Activated CD8-positive, alpha-beta T cell treated with anti-CD3 and anti-CD28 coated beads, Interleukin-2, amount 10 ng/mL, durations not matched to agents 7 days and 5 days (primary cell): ENCODE measurements at regions of chr22 and their contacts with region 1.

Region 1: GRCh38 chr22:24525416-24526037 is 29.4 kb downstream of the GUCD1 start:
- DNase-seq: peak; percentile 91
- ATAC-seq: peak; percentile 96
- H3K4me3 Mint-ChIP-seq: no peak overlapping the region
- H3K27ac Mint-ChIP-seq: no peak overlapping the region
- H3K4me1 Mint-ChIP-seq: peaks cover 14% of the 10 kb centered on the region
- H3K27me3 Mint-ChIP-seq: peaks cover 3% of the 10 kb centered on the region

Region 2: GRCh38 chr22:24325105-24325757 is 200.3 kb before region 1 on chr22:
- CTCF ChIA-PET with region 1: interaction called, 12 read pairs
- POLR2A ChIA-PET with region 1: no interaction called
- DNase-seq: peak; percentile 57
- ATAC-seq: peak; percentile 88
- H3K4me3 Mint-ChIP-seq: peak overlapping the region; percentile 0
- H3K27ac Mint-ChIP-seq: peak overlapping the region; percentile 23
- H3K4me1 Mint-ChIP-seq: peaks cover 34% of the 10 kb centered on the region
- H3K27me3 Mint-ChIP-seq: no peaks in the 10 kb centered on the region

Region 3: DNA sequence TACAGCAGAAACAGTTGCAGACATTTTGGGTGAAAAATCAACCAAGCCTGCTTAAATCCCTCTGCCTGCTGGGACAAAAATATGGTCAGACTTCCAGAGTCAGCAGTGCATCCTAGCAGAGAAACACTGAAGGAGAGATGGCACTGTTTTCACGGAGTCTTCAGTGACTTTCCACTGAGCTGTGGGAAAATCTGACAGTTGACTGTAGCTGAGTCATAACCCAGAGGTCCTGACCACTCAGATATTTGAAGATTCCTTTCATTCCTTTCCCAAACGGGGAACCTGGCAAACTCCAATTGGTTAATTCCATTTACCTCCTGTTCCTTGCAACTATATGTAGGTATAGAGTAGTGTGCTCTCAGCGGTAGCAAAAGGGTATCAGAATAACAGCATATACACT is 51.3 kb before region 1 on chr22:
- CTCF ChIA-PET with region 1: no interaction called
- POLR2A ChIA-PET with region 1: no interaction called
- DNase-seq: no peak
- ATAC-seq: no peak
- H3K4me3 Mint-ChIP-seq: no peak overlapping the region
- H3K27ac Mint-ChIP-seq: no peak overlapping the region
- H3K4me1 Mint-ChIP-seq: no peaks in the 10 kb centered on the region
- H3K27me3 Mint-ChIP-seq: no peaks in the 10 kb centered on the region

Region 4: GRCh38 chr22:24503137-24503842 is 22.2 kb before region 1 on chr22:
- CTCF ChIA-PET with region 1: interaction called, 11 read pairs
- POLR2A ChIA-PET with region 1: interaction called, 4 read pairs
- DNase-seq: peak; percentile 70
- ATAC-seq: peak; percentile 76
- H3K4me3 Mint-ChIP-seq: no peak overlapping the region
- H3K27ac Mint-ChIP-seq: no peak overlapping the region
- H3K4me1 Mint-ChIP-seq: peaks cover 34% of the 10 kb centered on the region
- H3K27me3 Mint-ChIP-seq: peaks cover 6% of the 10 kb centered on the region

Region 5: GRCh38 chr22:24510637-24511625 is 14.6 kb before region 1 on chr22:
- CTCF ChIA-PET with region 1: interaction called, 15 read pairs
- POLR2A ChIA-PET with region 1: interaction called, 4 read pairs
- DNase-seq: no peak
- ATAC-seq: no peak
- H3K4me3 Mint-ChIP-seq: no peak overlapping the region
- H3K27ac Mint-ChIP-seq: no peak overlapping the region
- H3K4me1 Mint-ChIP-seq: peaks cover 20% of the 10 kb centered on the region
- H3K27me3 Mint-ChIP-seq: peaks cover 5% of the 10 kb centered on the region

Region 6: DNA sequence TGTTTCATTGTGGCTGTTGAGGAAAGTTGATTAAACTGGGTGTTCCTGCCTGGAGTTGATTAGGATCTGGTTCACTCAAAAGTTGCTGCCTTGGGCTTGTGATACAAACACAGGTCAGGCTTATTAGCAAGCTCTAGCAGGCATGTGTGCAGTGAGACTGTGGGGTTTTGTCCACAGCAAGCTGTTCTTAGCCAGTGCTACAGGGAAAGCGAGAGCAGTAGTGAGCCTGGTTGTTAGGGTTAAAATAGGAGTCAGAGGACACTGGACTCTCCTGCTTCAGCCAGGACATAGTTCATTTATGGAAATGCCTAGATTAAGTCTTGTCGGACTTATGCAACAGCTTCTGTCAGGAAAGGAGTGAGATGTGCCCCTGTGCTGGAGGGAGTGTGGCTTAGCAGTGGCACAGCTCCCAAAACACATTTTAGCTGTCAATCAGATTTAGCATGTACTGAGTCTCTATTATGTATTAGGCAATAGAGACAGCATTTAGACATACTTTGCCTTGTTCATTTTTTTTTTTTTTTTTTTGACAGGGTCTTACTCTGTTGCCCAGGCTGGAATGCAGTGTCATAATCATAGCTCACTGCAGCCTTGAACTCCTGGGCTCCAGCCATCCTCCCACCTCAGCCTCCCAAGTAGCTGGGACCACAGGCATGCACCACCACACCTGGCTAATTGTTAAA is 39.0 kb after region 1 on chr22:
- CTCF ChIA-PET with region 1: no interaction called
- POLR2A ChIA-PET with region 1: no interaction called
- DNase-seq: no peak
- ATAC-seq: no peak
- H3K4me3 Mint-ChIP-seq: no peak overlapping the region
- H3K27ac Mint-ChIP-seq: peak overlapping the region; percentile 68
- H3K4me1 Mint-ChIP-seq: peaks cover 31% of the 10 kb centered on the region
- H3K27me3 Mint-ChIP-seq: no peaks in the 10 kb centered on the region

Region 7: DNA sequence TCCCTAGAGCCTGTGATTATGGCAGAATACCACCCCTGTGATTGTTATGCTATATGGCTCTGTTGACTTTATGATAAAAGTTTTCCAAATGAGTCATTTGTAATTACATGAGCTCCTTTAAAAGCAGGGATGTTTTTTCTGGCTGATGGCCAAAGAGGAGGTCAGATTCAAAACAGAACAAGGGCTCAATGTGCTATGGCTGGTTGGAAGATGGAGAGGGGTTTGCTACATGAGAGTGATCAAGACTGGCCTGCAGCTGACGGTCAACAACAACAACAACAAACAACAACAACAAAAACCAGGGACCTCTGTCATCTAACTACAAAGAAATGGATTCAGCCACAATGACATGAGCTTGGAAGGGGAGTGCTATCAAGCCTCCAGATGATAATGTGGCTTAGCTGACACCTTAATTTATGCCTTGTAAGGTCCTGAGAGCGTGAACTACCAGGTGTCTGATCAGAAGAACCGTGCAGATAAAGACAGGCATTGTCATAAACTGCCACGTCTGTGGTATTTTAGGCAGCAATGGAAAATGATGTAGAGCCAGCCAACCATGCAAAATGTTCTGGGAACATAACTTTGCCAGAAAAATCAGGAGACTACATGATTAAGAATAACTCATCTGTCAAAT is 201.8 kb after region 1 on chr22:
- CTCF ChIA-PET with region 1: no interaction called
- POLR2A ChIA-PET with region 1: no interaction called
- DNase-seq: no peak
- ATAC-seq: no peak
- H3K4me3 Mint-ChIP-seq: no peak overlapping the region
- H3K27ac Mint-ChIP-seq: no peak overlapping the region
- H3K4me1 Mint-ChIP-seq: no peaks in the 10 kb centered on the region
- H3K27me3 Mint-ChIP-seq: peaks cover 13% of the 10 kb centered on the region